ENCODE measurements at regions of chr4 and their contacts with region 1.

Region 1: DNA sequence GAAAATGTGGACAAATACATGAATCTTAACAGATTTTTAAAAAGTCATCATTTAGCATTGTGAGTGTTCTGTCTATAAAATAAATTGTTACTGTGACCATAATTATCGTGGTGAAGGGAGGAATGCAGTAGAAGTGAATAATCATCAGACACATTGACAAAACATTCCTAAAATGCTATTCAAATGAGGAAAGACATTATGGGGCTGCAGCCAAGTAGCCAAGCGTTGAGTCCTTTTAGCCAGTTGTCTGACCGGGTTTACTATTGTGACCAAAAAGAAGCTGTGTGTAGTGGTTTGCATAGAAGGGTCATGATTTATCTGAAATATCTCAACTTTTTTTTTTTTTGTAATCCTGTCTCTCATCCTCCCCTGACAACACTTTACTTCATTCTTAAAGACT is 19.5 kb downstream of the WWC2 start:
- DNase-seq: peak; percentile 52
- H3K4me3 ChIP-seq: peak overlapping the region; percentile 23; the same call in 1 of the 2 replicates
- CTCF ChIP-seq: no peak

Region 2: GRCh38 chr4:182795446-182796238 is 322.9 kb before region 1 on chr4:
- CTCF ChIA-PET with region 1: no interaction called
- POLR2A ChIA-PET with region 1: no interaction called
- DNase-seq: no peak
- H3K4me3 ChIP-seq: no peak overlapping the region
- CTCF ChIP-seq: no peak

Region 3: GRCh38 chr4:182826391-182826790 is 292.2 kb before region 1 on chr4:
- CTCF ChIA-PET with region 1: no interaction called
- POLR2A ChIA-PET with region 1: no interaction called
- DNase-seq: no peak
- H3K4me3 ChIP-seq: no peak overlapping the region
- CTCF ChIP-seq: no peak

Region 4: DNA sequence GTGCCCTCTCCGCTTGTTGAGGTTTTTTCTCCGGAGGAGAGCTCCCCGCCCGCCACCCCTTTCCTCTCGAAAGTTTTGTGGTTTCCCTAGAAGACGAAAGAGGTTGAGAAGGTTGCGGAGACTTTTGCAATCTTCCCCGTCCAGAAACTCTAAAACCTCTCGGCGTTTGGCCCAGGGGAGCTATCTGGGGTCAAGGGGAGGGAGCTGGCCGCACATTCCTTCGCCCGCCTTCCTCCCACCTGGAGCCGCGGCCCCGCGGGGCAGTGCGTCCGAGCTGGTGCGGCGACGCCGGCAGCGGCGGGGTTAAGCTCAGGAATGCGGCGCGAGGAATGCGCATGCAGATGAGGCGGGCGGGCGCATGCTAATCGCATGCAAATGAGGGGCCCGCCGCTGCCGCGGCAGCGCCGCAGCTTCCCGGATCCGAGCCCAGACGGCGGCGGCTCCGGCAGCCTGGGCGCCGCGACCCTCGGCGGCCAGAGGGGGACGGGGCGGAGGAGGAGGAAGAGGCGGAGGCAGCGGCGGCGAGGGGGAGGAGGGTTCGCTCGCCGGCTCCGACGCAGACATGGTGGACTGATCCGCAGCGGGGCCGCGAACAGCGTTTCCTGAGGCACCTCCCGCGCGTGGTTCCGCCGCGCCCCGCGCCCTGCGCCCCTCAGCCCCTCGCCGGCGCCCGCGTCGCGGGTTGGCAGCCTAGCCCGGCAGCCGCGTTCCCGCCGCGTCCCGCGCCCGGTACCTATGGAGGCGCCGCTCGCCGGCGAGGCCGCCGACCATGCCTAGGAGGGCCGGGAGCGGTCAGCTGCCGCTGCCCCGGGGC is 19.7 kb before region 1 on chr4 and contains the start of gene WWC2:
- CTCF ChIA-PET with region 1: interaction called, 13 read pairs
- POLR2A ChIA-PET with region 1: interaction called, 12 read pairs
- DNase-seq: peak; percentile 41
- H3K4me3 ChIP-seq: peak within 1 kb of the TSS; percentile 94
- CTCF ChIP-seq: peak; percentile 7

Region 5: GRCh38 chr4:183272384-183272783 is 153.8 kb after region 1 on chr4:
- CTCF ChIA-PET with region 1: no interaction called
- POLR2A ChIA-PET with region 1: no interaction called
- DNase-seq: no peak
- H3K4me3 ChIP-seq: no peak overlapping the region
- CTCF ChIP-seq: no peak